ENCODE measurements at regions of chr7 and their contacts with region 1.

Region 1: GRCh38 chr7:105691733-105692564 is 110.7 kb upstream of the EFCAB10 start:
- DNase-seq: no peak
- H3K4me3 ChIP-seq: peak overlapping the region; percentile 11 to 48 (median 30); a peak in 5 of 8 replicates
- H3K27ac ChIP-seq: peak overlapping the region; percentile 42; the same call in 1 of the 2 replicates
- H3K4me1 ChIP-seq: peaks cover 31 to 48% (median 40%) of the 10 kb centered on the region in 4 experiments
- H3K27me3 ChIP-seq: no peaks in the 10 kb centered on the region
- CTCF ChIP-seq: no peak
- EP300 ChIP-seq: no peak
- POLR2A ChIP-seq: no peak
- RAD21 ChIP-seq: no peak

Region 2: GRCh38 chr7:105713488-105714465 is 21.8 kb after region 1 on chr7:
- CTCF ChIA-PET with region 1: interaction called, 13 read pairs
- POLR2A ChIA-PET with region 1: interaction called, 5 read pairs
- DNase-seq: no peak
- H3K4me3 ChIP-seq: no peak overlapping the region
- H3K27ac ChIP-seq: no peak overlapping the region
- H3K4me1 ChIP-seq: peaks cover 0 to 7% (median 3%) of the 10 kb centered on the region in 4 experiments; a peak in 4 of 7 replicates
- H3K27me3 ChIP-seq: no peaks in the 10 kb centered on the region
- CTCF ChIP-seq: no peak
- EP300 ChIP-seq: no peak
- POLR2A ChIP-seq: no peak
- RAD21 ChIP-seq: no peak

Region 3: GRCh38 chr7:105743351-105744090 is 51.6 kb after region 1 on chr7:
- CTCF ChIA-PET with region 1: interaction called, 16 read pairs
- POLR2A ChIA-PET with region 1: interaction called, 5 read pairs
- DNase-seq: no peak
- H3K4me3 ChIP-seq: no peak overlapping the region
- H3K27ac ChIP-seq: no peak overlapping the region
- H3K4me1 ChIP-seq: peaks cover 0 to 13% (median 6%) of the 10 kb centered on the region in 4 experiments; a peak in 5 of 7 replicates
- H3K27me3 ChIP-seq: no peaks in the 10 kb centered on the region
- CTCF ChIP-seq: no peak
- EP300 ChIP-seq: no peak
- POLR2A ChIP-seq: no peak
- RAD21 ChIP-seq: no peak

Region 4: DNA sequence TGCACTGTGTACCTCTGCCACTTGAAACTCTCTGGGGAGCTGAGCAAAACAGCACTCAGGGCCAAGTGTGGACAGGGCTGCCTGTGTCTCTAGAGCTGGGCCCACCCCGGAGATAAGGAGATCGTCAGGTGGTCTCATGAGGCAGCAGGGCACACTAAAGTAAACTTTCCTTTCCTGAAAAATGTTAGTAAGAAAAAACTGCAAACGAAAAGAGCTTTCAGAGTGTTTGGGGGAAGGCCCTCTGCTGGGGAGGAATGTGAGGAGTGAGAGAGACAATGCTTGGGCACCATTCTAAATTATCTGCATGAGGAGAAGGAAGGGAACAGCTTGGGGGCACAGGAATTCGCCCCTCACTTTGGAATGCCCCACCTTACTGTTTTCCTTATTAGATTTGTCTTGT is 56.8 kb after region 1 on chr7:
- CTCF ChIA-PET with region 1: interaction called, 18 read pairs
- POLR2A ChIA-PET with region 1: interaction called, 5 read pairs
- DNase-seq: no peak
- H3K4me3 ChIP-seq: no peak overlapping the region
- H3K27ac ChIP-seq: peak overlapping the region; percentile 49; the same call in 1 of the 2 replicates
- H3K4me1 ChIP-seq: peaks cover 0 to 13% (median 6%) of the 10 kb centered on the region in 4 experiments; a peak in 6 of 7 replicates
- H3K27me3 ChIP-seq: no peaks in the 10 kb centered on the region
- CTCF ChIP-seq: peak in 1 of 3 experiments; percentile 22; a peak in 1 of 4 replicates
- EP300 ChIP-seq: no peak
- POLR2A ChIP-seq: no peak
- RAD21 ChIP-seq: peak; percentile 24 to 44; a peak in 3 of 4 replicates